ENCODE measurements at regions of chr4 and their contacts with region 1.

Region 1: DNA sequence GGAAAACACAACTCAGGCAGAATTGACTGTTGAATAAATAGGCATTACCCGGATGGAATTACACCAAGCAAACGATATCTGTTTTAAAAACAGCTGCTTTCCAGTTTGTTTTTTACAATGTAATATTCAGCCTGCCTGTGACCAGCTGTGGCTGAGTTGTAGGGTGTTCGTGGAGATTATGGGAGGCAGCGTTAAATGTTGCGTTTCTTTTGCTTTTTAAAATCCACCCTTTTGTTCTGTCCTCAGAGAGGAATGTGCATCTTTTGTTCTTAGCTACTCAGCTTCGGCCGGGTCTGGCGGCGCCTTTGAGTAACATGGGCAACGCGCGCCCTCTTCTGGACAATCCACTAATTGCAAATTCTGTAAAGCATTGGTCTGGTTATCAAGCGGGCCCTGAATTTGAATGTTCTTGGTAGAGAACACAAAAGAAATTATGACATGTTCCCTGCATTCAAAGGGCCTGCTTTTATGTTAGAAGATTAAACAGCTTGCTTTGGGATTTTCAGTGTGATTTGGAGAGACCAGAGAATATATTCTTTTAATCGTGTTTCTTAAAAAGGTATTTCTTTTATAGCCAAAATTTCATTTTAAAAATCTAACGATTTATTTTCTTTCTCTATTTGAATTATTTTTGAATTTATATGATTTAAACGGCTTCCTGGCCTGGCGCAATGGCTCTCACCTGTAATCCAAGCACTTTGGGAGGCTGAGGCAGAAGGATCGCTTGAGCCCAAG is 76.3 kb upstream of the TRIM2 start:
- DNase-seq: peak; percentile 67 to 91 (median 81)
- ATAC-seq: peak; percentile 91
- H3K4me3 ChIP-seq: no peak overlapping the region
- H3K4me3 Mint-ChIP-seq: no peak overlapping the region
- H3K27ac ChIP-seq: no peak overlapping the region
- H3K27ac Mint-ChIP-seq: peak overlapping the region in 8 of 9 donors; percentile 25 to 91 (median 64)
- H3K4me1 ChIP-seq: no peaks in the 10 kb centered on the region
- H3K4me1 Mint-ChIP-seq: peaks cover 0 to 8% (median 5%) of the 10 kb centered on the region in 7 donors
- H3K27me3 ChIP-seq: no peaks in the 10 kb centered on the region
- H3K27me3 Mint-ChIP-seq: peaks cover 0 to 29% (median 0%) of the 10 kb centered on the region in 5 donors

Region 2: GRCh38 chr4:152850377-152850776 is 277.6 kb before region 1 on chr4:
- CTCF ChIA-PET with region 1: interaction called, 25 read pairs
- POLR2A ChIA-PET with region 1: interaction called, 4 read pairs
- intact Hi-C with region 1: loop called (anchors 1 kb)
- DNase-seq: peak in 4 of 9 donors; percentile 2 to 20 (median 11)
- ATAC-seq: peak; percentile 78
- H3K4me3 ChIP-seq: no peak overlapping the region
- H3K4me3 Mint-ChIP-seq: peak overlapping the region in 5 of 10 donors; percentile 9 to 40 (median 34)
- H3K27ac ChIP-seq: no peak overlapping the region
- H3K27ac Mint-ChIP-seq: peak overlapping the region in 4 of 9 donors; percentile 9 to 55 (median 36)
- H3K4me1 ChIP-seq: peaks cover 0 to 11% of the 10 kb centered on the region in 2 donors
- H3K4me1 Mint-ChIP-seq: peaks cover 13 to 26% (median 21%) of the 10 kb centered on the region in 7 donors
- H3K27me3 ChIP-seq: no peaks in the 10 kb centered on the region
- H3K27me3 Mint-ChIP-seq: no peaks in the 10 kb centered on the region

Region 3: GRCh38 chr4:152937336-152938236 is 190.3 kb before region 1 on chr4:
- CTCF ChIA-PET with region 1: no interaction called
- POLR2A ChIA-PET with region 1: no interaction called
- intact Hi-C with region 1: loop called (anchors 5 to 10 kb)
- DNase-seq: peak in 5 of 9 donors; percentile 10 to 37 (median 16)
- ATAC-seq: peak; percentile 46
- H3K4me3 ChIP-seq: peak overlapping the region; percentile 35
- H3K4me3 Mint-ChIP-seq: peak overlapping the region; percentile 74 to 90 (median 86)
- H3K27ac ChIP-seq: no peak overlapping the region
- H3K27ac Mint-ChIP-seq: peak overlapping the region in 1 of 9 donors; percentile 47
- H3K4me1 ChIP-seq: peaks cover 0 to 8% of the 10 kb centered on the region in 2 donors
- H3K4me1 Mint-ChIP-seq: peaks cover 13 to 27% (median 25%) of the 10 kb centered on the region in 7 donors
- H3K27me3 ChIP-seq: peaks cover 3 to 9% of the 10 kb centered on the region in 2 donors
- H3K27me3 Mint-ChIP-seq: peaks cover 44 to 78% (median 60%) of the 10 kb centered on the region in 5 donors

Region 4: DNA sequence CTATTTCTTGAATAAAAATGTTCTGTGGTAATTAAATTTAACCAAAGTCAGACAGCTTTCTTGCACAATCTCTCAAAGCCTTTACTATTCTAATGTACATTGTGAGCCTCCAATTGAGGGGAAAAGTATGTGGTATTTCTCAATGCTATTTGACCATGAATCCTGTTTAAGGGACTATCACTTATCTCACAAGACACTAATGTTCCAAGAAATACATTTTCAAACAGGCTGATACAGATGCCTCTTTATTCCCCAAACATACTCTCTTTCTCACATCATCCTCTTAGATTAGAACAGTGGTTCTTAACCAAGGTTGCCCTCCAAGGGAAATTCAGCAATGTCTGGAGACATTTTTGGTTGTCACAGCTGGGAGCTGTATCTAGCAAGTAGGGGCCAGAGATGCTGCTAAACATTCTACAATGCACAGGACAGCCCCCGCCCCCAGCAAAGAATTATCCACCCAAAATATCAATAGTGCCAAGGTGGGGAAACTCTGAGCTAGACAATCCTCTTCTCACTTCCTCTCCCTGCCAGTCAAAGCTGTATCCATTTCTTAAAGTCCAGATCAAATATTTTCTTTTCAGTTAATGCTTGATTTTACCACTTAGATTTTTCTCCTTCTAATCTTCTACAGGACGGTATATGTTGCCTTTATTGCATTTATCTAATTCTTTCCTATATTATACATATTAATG is 52.8 kb before region 1 on chr4:
- CTCF ChIA-PET with region 1: interaction called, 193 read pairs
- POLR2A ChIA-PET with region 1: no interaction called
- intact Hi-C with region 1: no loop called
- DNase-seq: no peak
- ATAC-seq: no peak
- H3K4me3 ChIP-seq: no peak overlapping the region
- H3K4me3 Mint-ChIP-seq: no peak overlapping the region
- H3K27ac ChIP-seq: no peak overlapping the region
- H3K27ac Mint-ChIP-seq: no peak overlapping the region
- H3K4me1 ChIP-seq: peaks cover 0 to 8% of the 10 kb centered on the region in 2 donors
- H3K4me1 Mint-ChIP-seq: peaks cover 0 to 16% (median 15%) of the 10 kb centered on the region in 7 donors
- H3K27me3 ChIP-seq: no peaks in the 10 kb centered on the region
- H3K27me3 Mint-ChIP-seq: peaks cover 0 to 39% (median 0%) of the 10 kb centered on the region in 5 donors

Region 5: GRCh38 chr4:153089742-153090141 is 38.2 kb before region 1 on chr4:
- CTCF ChIA-PET with region 1: interaction called, 85 read pairs
- POLR2A ChIA-PET with region 1: interaction called, 5 read pairs
- intact Hi-C with region 1: no loop called
- DNase-seq: no peak
- ATAC-seq: no peak
- H3K4me3 ChIP-seq: no peak overlapping the region
- H3K4me3 Mint-ChIP-seq: no peak overlapping the region
- H3K27ac ChIP-seq: no peak overlapping the region
- H3K27ac Mint-ChIP-seq: no peak overlapping the region
- H3K4me1 ChIP-seq: peaks cover 0 to 8% of the 10 kb centered on the region in 2 donors
- H3K4me1 Mint-ChIP-seq: peaks cover 8 to 22% (median 18%) of the 10 kb centered on the region in 7 donors
- H3K27me3 ChIP-seq: no peaks in the 10 kb centered on the region
- H3K27me3 Mint-ChIP-seq: peaks cover 0 to 6% (median 0%) of the 10 kb centered on the region in 5 donors

Region 6: GRCh38 chr4:153115322-153116290 is 12.3 kb before region 1 on chr4:
- CTCF ChIA-PET with region 1: interaction called, 102 read pairs
- POLR2A ChIA-PET with region 1: interaction called, 23 read pairs
- intact Hi-C with region 1: loop called in 1 of 2 experiments (anchors 1 kb)
- DNase-seq: peak in 8 of 9 donors; percentile 64 to 93 (median 89)
- ATAC-seq: peak; percentile 65
- H3K4me3 ChIP-seq: peak overlapping the region; percentile 46
- H3K4me3 Mint-ChIP-seq: peak overlapping the region in 2 of 10 donors; percentile 70 to 79
- H3K27ac ChIP-seq: peak overlapping the region; percentile 84
- H3K27ac Mint-ChIP-seq: no peak overlapping the region
- H3K4me1 ChIP-seq: peaks cover 43 to 62% of the 10 kb centered on the region in 2 donors
- H3K4me1 Mint-ChIP-seq: peaks cover 0 to 26% (median 11%) of the 10 kb centered on the region in 7 donors
- H3K27me3 ChIP-seq: no peaks in the 10 kb centered on the region
- H3K27me3 Mint-ChIP-seq: peaks cover 0 to 9% (median 0%) of the 10 kb centered on the region in 5 donors